ENCODE measurements at regions of chr14 and their contacts with region 1.

Region 1: GRCh38 chr14:61730756-61731373 is 31.4 kb upstream of the SNAPC1 start:
- DNase-seq: no peak
- ATAC-seq: no peak
- H3K4me3 ChIP-seq: no peak overlapping the region
- H3K27ac ChIP-seq: no peak overlapping the region
- H3K4me1 ChIP-seq: no peaks in the 10 kb centered on the region
- H3K27me3 ChIP-seq: no peaks in the 10 kb centered on the region
- CTCF ChIP-seq: peak; percentile 29; the same call in 1 of the 2 replicates

Region 2: GRCh38 chr14:61461808-61462275 is 269.0 kb before region 1 on chr14:
- CTCF ChIA-PET with region 1: no interaction called
- POLR2A ChIA-PET with region 1: no interaction called
- in situ Hi-C with region 1: no loop called
- intact Hi-C with region 1: loop called (anchors 5 kb)
- DNase-seq: no peak
- ATAC-seq: peak; percentile 73
- H3K4me3 ChIP-seq: no peak overlapping the region
- H3K27ac ChIP-seq: no peak overlapping the region
- H3K4me1 ChIP-seq: no peaks in the 10 kb centered on the region; the same call in 1 of the 2 replicates
- H3K27me3 ChIP-seq: no peaks in the 10 kb centered on the region
- CTCF ChIP-seq: peak; percentile 61

Region 3: DNA sequence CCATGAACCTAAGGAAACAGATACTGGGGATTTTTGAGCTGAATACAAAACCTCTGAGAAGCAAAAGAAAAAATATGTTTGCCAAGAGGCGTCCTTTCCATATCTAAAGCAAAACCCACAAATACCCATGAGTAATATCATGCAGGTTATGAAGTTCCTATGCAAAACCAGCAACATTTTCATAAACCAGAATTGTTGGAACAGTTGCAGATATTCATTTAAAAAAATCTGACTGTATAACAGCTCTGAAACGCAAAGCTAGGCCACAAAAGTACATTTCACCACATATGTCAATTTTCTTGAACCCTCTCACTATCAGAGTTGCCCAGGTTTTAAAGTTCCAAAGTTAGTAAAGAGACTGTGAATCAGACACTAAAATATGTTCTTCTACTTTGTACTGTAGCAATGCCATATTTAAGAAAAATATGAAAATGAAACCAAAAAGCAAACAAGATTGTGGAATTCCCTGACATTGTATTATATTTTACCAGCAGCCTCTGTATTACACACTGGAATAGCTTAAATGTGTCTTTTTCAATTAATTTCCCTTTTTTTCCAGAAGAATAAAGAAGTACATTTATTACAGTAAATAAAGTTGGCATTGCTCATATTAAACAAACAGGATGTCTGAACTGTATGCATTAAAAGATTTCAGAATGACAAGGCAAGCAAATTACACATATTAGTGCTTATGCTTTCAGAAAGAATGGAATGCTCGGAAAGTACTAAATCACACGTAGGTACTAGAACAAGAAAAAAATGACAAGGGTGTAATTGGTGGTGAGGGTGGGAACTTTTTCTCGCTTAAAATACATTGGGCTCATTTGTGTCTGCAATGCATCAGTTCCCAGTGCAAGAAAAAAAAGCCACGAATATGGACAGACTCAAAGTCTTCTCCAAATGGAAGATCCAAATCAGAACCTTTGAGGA is 69.1 kb before region 1 on chr14:
- CTCF ChIA-PET with region 1: no interaction called
- POLR2A ChIA-PET with region 1: no interaction called
- in situ Hi-C with region 1: no loop called
- intact Hi-C with region 1: no loop called
- DNase-seq: no peak
- ATAC-seq: no peak
- H3K4me3 ChIP-seq: no peak overlapping the region
- H3K27ac ChIP-seq: no peak overlapping the region
- H3K4me1 ChIP-seq: no peaks in the 10 kb centered on the region; the same call in 1 of the 2 replicates
- H3K27me3 ChIP-seq: no peaks in the 10 kb centered on the region
- CTCF ChIP-seq: no peak

Region 4: DNA sequence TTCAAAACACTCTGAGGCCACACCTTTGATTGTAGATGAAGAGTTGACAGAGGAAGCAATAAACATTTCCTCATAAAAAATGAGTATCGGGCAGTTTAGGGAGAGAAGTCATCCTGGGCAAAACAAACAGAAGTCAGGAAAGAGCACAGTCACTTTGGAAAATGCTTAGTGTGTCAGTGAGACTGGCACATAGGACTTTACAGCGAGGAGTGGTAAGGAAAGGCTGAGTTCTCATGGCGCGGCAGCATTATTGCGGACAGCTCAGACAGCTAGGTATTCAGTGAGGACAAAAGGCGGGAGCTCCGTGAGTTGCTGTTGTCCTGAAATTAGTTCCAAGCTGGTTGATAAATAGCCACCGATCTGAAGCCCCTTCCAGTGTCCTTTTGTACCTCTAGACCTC is 261.3 kb after region 1 on chr14:
- CTCF ChIA-PET with region 1: no interaction called
- POLR2A ChIA-PET with region 1: no interaction called
- in situ Hi-C with region 1: no loop called
- intact Hi-C with region 1: no loop called
- DNase-seq: no peak
- ATAC-seq: no peak
- H3K4me3 ChIP-seq: no peak overlapping the region
- H3K27ac ChIP-seq: no peak overlapping the region
- H3K4me1 ChIP-seq: no peaks in the 10 kb centered on the region
- H3K27me3 ChIP-seq: no peaks in the 10 kb centered on the region
- CTCF ChIP-seq: no peak